B cell (primary cell): ENCODE measurements at regions of chr12 and their contacts with region 1.

Region 1: GRCh38 chr12:32211066-32211899 is 104.6 kb downstream of the BICD1 start:
- DNase-seq: no peak
- ATAC-seq: no peak
- H3K4me3 ChIP-seq: no peak overlapping the region
- H3K4me3 Mint-ChIP-seq: no peak overlapping the region
- H3K27ac ChIP-seq: no peak overlapping the region
- H3K27ac Mint-ChIP-seq: no peak overlapping the region
- H3K4me1 ChIP-seq: peaks cover 3 to 11% of the 10 kb centered on the region in 2 donors
- H3K4me1 Mint-ChIP-seq: peaks cover 29% of the 10 kb centered on the region
- H3K27me3 ChIP-seq: no peaks in the 10 kb centered on the region
- H3K27me3 Mint-ChIP-seq: no peaks in the 10 kb centered on the region
- CTCF ChIP-seq: no peak

Region 2: DNA sequence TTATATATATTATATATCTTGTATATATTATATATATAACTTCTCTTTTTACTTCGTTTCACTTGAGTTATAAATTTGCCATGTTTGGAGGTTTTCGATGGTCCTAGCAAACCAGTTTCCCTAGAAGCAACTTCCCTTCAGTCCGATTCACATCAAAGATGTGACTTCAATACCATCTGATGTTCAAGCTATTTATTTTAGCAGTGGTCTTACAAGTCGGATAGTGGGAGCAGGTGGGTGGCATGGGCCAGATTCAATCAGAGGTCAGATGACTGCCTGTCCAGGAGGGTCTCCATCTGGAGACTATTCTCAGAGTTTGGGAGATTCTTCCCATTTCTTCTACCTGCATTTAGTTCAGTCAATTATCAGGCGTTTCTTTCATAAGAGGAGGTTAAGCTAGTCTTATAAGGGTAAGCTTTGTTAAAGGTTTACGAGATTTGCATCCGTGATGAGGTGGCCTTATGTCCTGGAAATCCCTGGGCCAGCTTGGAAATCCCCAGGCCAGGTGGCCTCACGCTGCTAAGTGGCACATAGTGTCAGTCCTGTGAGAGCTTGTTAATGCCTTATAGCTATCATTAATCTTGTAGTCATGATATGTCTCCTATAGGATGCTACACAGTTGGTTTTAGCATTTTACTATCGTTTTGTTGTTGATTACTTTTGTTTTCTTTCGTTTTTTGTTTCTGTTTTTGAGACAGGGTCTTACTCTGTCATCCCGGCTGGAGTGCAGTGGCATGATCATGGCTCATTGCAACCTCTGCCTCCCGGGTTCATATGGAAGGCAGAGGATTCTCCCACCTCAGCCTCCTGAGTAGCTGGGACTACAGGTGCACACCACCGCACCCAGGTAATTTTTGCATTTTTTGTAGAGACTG is 41.2 kb after region 1 on chr12:
- CTCF ChIA-PET with region 1: no interaction called
- POLR2A ChIA-PET with region 1: interaction called, 5 read pairs
- intact Hi-C with region 1: loop called (anchors 5 kb)
- DNase-seq: peak; percentile 68
- ATAC-seq: peak; percentile 66
- H3K4me3 ChIP-seq: peak overlapping the region in 1 of 5 experiments; percentile 23
- H3K4me3 Mint-ChIP-seq: peak overlapping the region; percentile 77
- H3K27ac ChIP-seq: peak overlapping the region in 1 of 2 donors; percentile 11
- H3K27ac Mint-ChIP-seq: peak overlapping the region; percentile 77
- H3K4me1 ChIP-seq: peaks cover 0 to 8% of the 10 kb centered on the region in 2 donors
- H3K4me1 Mint-ChIP-seq: peaks cover 20% of the 10 kb centered on the region
- H3K27me3 ChIP-seq: no peaks in the 10 kb centered on the region
- H3K27me3 Mint-ChIP-seq: no peaks in the 10 kb centered on the region
- CTCF ChIP-seq: no peak